CD4-positive, alpha-beta T cell (primary cell): ENCODE measurements at regions of chrX and their contacts with region 1.

Region 1: GRCh38 chrX:65985922-65986588 is 53.8 kb downstream of the VSIG4 start:
- DNase-seq: peak in 12 of 14 experiments; percentile 4 to 81 (median 28)
- ATAC-seq: peak; percentile 90
- H3K4me3 ChIP-seq: no peak overlapping the region
- H3K4me3 Mint-ChIP-seq: no peak overlapping the region
- H3K27ac ChIP-seq: no peak overlapping the region
- H3K27ac Mint-ChIP-seq: peak overlapping the region; percentile 79
- H3K4me1 ChIP-seq: peaks cover 11% of the 10 kb centered on the region
- H3K4me1 Mint-ChIP-seq: peaks cover 25% of the 10 kb centered on the region
- H3K27me3 ChIP-seq: no peaks in the 10 kb centered on the region
- H3K27me3 Mint-ChIP-seq: no peaks in the 10 kb centered on the region
- CTCF ChIP-seq: peak; percentile 52

Region 2: GRCh38 chrX:65610481-65610880 is 375.6 kb before region 1 on chrX:
- CTCF ChIA-PET with region 1: no interaction called
- POLR2A ChIA-PET with region 1: no interaction called
- intact Hi-C with region 1: no loop called
- DNase-seq: no peak
- ATAC-seq: no peak
- H3K4me3 ChIP-seq: no peak overlapping the region
- H3K4me3 Mint-ChIP-seq: no peak overlapping the region
- H3K27ac ChIP-seq: no peak overlapping the region
- H3K27ac Mint-ChIP-seq: peak overlapping the region; percentile 49
- H3K4me1 ChIP-seq: peaks cover 24% of the 10 kb centered on the region
- H3K4me1 Mint-ChIP-seq: peaks cover 39% of the 10 kb centered on the region
- H3K27me3 ChIP-seq: no peaks in the 10 kb centered on the region
- H3K27me3 Mint-ChIP-seq: no peaks in the 10 kb centered on the region
- CTCF ChIP-seq: no peak

Region 3: DNA sequence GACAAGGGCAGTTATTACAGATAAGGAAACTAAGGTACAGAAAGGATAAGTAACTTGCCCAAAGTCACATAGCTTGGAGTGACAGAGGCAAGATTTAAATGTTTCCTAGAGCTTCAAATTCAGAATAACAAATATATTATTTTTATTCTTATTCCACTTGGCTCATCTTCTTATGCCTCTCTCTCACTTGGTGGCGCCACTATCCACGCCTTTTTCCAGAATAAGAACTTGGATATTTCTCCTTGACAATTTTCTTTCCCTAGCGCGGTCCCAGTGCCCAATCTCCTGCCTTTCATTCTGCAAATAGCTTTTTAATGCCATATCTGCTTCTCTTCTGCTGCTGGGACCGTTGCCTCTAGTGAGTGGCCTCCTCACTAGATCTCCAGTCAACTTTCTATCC is 240.1 kb before region 1 on chrX:
- CTCF ChIA-PET with region 1: no interaction called
- POLR2A ChIA-PET with region 1: no interaction called
- intact Hi-C with region 1: loop called in 1 of 2 experiments (anchors 5 kb)
- DNase-seq: no peak
- ATAC-seq: no peak
- H3K4me3 ChIP-seq: no peak overlapping the region
- H3K4me3 Mint-ChIP-seq: no peak overlapping the region
- H3K27ac ChIP-seq: no peak overlapping the region
- H3K27ac Mint-ChIP-seq: peak overlapping the region; percentile 34
- H3K4me1 ChIP-seq: peaks cover 9% of the 10 kb centered on the region
- H3K4me1 Mint-ChIP-seq: peaks cover 56% of the 10 kb centered on the region
- H3K27me3 ChIP-seq: no peaks in the 10 kb centered on the region
- H3K27me3 Mint-ChIP-seq: no peaks in the 10 kb centered on the region
- CTCF ChIP-seq: no peak

Region 4: GRCh38 chrX:65862638-65863037 is 123.4 kb before region 1 on chrX:
- CTCF ChIA-PET with region 1: no interaction called
- POLR2A ChIA-PET with region 1: no interaction called
- intact Hi-C with region 1: no loop called
- DNase-seq: peak in 6 of 14 experiments; percentile 1 to 52 (median 22)
- ATAC-seq: peak; percentile 54
- H3K4me3 ChIP-seq: no peak overlapping the region
- H3K4me3 Mint-ChIP-seq: no peak overlapping the region
- H3K27ac ChIP-seq: no peak overlapping the region
- H3K27ac Mint-ChIP-seq: no peak overlapping the region
- H3K4me1 ChIP-seq: peaks cover 20% of the 10 kb centered on the region
- H3K4me1 Mint-ChIP-seq: peaks cover 63% of the 10 kb centered on the region
- H3K27me3 ChIP-seq: no peaks in the 10 kb centered on the region
- H3K27me3 Mint-ChIP-seq: no peaks in the 10 kb centered on the region
- CTCF ChIP-seq: no peak

Region 5: GRCh38 chrX:65941775-65942174 is 44.3 kb before region 1 on chrX:
- CTCF ChIA-PET with region 1: no interaction called
- POLR2A ChIA-PET with region 1: no interaction called
- intact Hi-C with region 1: no loop called
- DNase-seq: no peak
- ATAC-seq: no peak
- H3K4me3 ChIP-seq: no peak overlapping the region
- H3K4me3 Mint-ChIP-seq: no peak overlapping the region
- H3K27ac ChIP-seq: no peak overlapping the region
- H3K27ac Mint-ChIP-seq: no peak overlapping the region
- H3K4me1 ChIP-seq: no peaks in the 10 kb centered on the region
- H3K4me1 Mint-ChIP-seq: peaks cover 27% of the 10 kb centered on the region
- H3K27me3 ChIP-seq: no peaks in the 10 kb centered on the region
- H3K27me3 Mint-ChIP-seq: no peaks in the 10 kb centered on the region
- CTCF ChIP-seq: no peak